B cell (primary cell): ENCODE measurements at regions of chr5 and their contacts with region 1.

Region 1: GRCh38 chr5:40386289-40386688 is 293.4 kb upstream of the PTGER4 start:
- DNase-seq: peak; percentile 52
- ATAC-seq: peak; percentile 57
- H3K4me3 ChIP-seq: no peak overlapping the region
- H3K4me3 Mint-ChIP-seq: no peak overlapping the region
- H3K27ac ChIP-seq: no peak overlapping the region
- H3K27ac Mint-ChIP-seq: no peak overlapping the region
- H3K4me1 ChIP-seq: peaks cover 36 to 43% of the 10 kb centered on the region in 2 donors
- H3K4me1 Mint-ChIP-seq: peaks cover 45% of the 10 kb centered on the region
- H3K27me3 ChIP-seq: no peaks in the 10 kb centered on the region
- H3K27me3 Mint-ChIP-seq: no peaks in the 10 kb centered on the region
- CTCF ChIP-seq: no peak

Region 2: GRCh38 chr5:40367255-40367654 is 19.0 kb before region 1 on chr5:
- CTCF ChIA-PET with region 1: no interaction called
- POLR2A ChIA-PET with region 1: no interaction called
- intact Hi-C with region 1: no loop called
- DNase-seq: peak; percentile 45
- ATAC-seq: no peak
- H3K4me3 ChIP-seq: no peak overlapping the region
- H3K4me3 Mint-ChIP-seq: no peak overlapping the region
- H3K27ac ChIP-seq: no peak overlapping the region
- H3K27ac Mint-ChIP-seq: peak overlapping the region; percentile 23
- H3K4me1 ChIP-seq: peaks cover 3 to 4% of the 10 kb centered on the region in 2 donors
- H3K4me1 Mint-ChIP-seq: peaks cover 11% of the 10 kb centered on the region
- H3K27me3 ChIP-seq: no peaks in the 10 kb centered on the region
- H3K27me3 Mint-ChIP-seq: no peaks in the 10 kb centered on the region
- CTCF ChIP-seq: no peak

Region 3: GRCh38 chr5:40404613-40405012 is 18.3 kb after region 1 on chr5:
- CTCF ChIA-PET with region 1: no interaction called
- POLR2A ChIA-PET with region 1: no interaction called
- intact Hi-C with region 1: loop called (anchors 2 kb)
- DNase-seq: peak; percentile 49
- ATAC-seq: peak; percentile 52
- H3K4me3 ChIP-seq: no peak overlapping the region
- H3K4me3 Mint-ChIP-seq: peak overlapping the region; percentile 20
- H3K27ac ChIP-seq: no peak overlapping the region
- H3K27ac Mint-ChIP-seq: peak overlapping the region; percentile 46
- H3K4me1 ChIP-seq: peaks cover 37% of the 10 kb centered on the region in 2 donors
- H3K4me1 Mint-ChIP-seq: peaks cover 47% of the 10 kb centered on the region
- H3K27me3 ChIP-seq: no peaks in the 10 kb centered on the region
- H3K27me3 Mint-ChIP-seq: no peaks in the 10 kb centered on the region
- CTCF ChIP-seq: no peak

Region 4: DNA sequence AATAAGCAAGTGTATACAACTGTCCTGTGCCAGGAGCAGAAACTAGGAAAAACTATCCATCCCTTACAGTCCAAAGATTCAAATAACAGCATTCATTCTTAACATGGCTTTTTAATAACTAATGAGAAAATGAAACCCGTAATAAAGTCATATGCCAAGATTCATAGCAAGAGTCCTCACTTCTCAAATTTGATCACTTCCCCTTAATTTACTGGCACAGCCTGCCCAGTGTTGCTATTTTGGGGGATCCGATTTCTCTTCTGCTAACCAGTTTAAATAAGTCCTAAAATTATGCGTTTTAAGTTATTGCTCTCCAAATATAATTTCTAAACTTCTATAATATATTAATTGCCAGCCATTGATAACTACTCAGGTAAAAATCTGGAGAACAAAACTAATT is 116.4 kb after region 1 on chr5:
- CTCF ChIA-PET with region 1: no interaction called
- POLR2A ChIA-PET with region 1: no interaction called
- intact Hi-C with region 1: loop called (anchors 5 kb)
- DNase-seq: peak; percentile 67
- ATAC-seq: peak; percentile 68
- H3K4me3 ChIP-seq: peak overlapping the region in 3 of 5 experiments; percentile 12 to 51 (median 30)
- H3K4me3 Mint-ChIP-seq: no peak overlapping the region
- H3K27ac ChIP-seq: peak overlapping the region in 1 of 2 donors; percentile 60
- H3K27ac Mint-ChIP-seq: no peak overlapping the region
- H3K4me1 ChIP-seq: peaks cover 14 to 17% of the 10 kb centered on the region in 2 donors
- H3K4me1 Mint-ChIP-seq: peaks cover 6% of the 10 kb centered on the region
- H3K27me3 ChIP-seq: no peaks in the 10 kb centered on the region
- H3K27me3 Mint-ChIP-seq: no peaks in the 10 kb centered on the region
- CTCF ChIP-seq: no peak

Region 5: DNA sequence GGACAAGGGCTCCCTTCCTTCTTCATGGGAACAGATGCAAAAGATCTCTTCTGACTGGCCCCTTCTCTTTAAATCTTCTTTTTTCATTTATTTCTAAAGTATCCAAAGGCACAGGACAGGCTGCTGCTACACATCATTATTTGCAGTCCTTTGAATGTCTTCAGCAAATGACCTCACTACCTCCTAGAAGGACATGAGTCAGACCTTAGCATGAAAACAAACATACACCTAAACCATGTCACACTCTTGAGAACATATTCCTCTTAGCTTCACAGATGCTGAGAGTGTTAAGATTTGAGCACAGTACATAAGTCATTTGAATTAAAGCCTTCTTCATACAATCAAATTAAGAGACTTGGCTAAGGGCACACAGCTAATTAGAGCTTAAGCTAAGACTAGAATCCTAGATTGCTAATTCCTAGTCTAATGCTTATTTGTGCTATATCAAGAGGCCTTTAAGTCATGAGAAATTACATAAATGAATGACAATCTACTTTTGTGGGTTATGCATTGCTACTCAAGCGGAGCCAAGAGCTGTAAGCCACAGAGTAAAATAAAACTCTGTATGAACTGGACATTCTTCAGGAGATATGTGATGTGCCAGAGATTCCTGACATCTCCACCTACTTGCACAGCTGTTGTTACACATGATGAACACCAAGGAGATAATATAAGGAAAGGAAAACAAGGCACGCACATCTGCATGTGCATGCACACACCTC is 184.3 kb after region 1 on chr5:
- CTCF ChIA-PET with region 1: no interaction called
- POLR2A ChIA-PET with region 1: no interaction called
- intact Hi-C with region 1: loop called (anchors 10 kb)
- DNase-seq: peak; percentile 53
- ATAC-seq: peak; percentile 75
- H3K4me3 ChIP-seq: no peak overlapping the region
- H3K4me3 Mint-ChIP-seq: peak overlapping the region; percentile 66
- H3K27ac ChIP-seq: no peak overlapping the region
- H3K27ac Mint-ChIP-seq: peak overlapping the region; percentile 76
- H3K4me1 ChIP-seq: peaks cover 34 to 38% of the 10 kb centered on the region in 2 donors
- H3K4me1 Mint-ChIP-seq: peaks cover 35% of the 10 kb centered on the region
- H3K27me3 ChIP-seq: no peaks in the 10 kb centered on the region
- H3K27me3 Mint-ChIP-seq: peaks cover 4% of the 10 kb centered on the region
- CTCF ChIP-seq: no peak

Region 6: DNA sequence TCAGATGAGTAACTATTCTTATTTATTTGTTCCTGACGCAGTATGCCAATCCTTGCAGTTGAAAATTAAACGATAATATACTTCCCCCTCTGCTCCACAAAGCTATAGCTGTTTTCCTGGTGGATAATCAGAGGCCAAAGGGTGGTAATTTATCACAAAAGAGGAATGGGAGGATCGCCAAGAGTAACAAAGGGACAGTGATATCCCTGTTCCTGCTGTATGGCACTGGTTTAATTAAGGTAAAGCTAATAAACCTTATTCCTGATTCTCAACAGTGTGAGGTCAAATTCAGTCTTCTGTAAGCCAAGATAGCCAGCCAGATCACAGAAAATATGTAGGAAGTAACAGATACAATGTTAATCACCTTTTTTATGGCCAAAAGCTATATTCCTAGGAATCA is 260.0 kb after region 1 on chr5:
- CTCF ChIA-PET with region 1: no interaction called
- POLR2A ChIA-PET with region 1: no interaction called
- intact Hi-C with region 1: no loop called
- DNase-seq: no peak
- ATAC-seq: no peak
- H3K4me3 ChIP-seq: no peak overlapping the region
- H3K4me3 Mint-ChIP-seq: no peak overlapping the region
- H3K27ac ChIP-seq: no peak overlapping the region
- H3K27ac Mint-ChIP-seq: no peak overlapping the region
- H3K4me1 ChIP-seq: peaks cover 12% of the 10 kb centered on the region in 2 donors
- H3K4me1 Mint-ChIP-seq: peaks cover 12% of the 10 kb centered on the region
- H3K27me3 ChIP-seq: no peaks in the 10 kb centered on the region
- H3K27me3 Mint-ChIP-seq: no peaks in the 10 kb centered on the region
- CTCF ChIP-seq: no peak